ENCODE measurements at regions of chr19 and their contacts with region 1.

Region 1: GRCh38 chr19:4803736-4804695 is 12.5 kb downstream of the FEM1A start:
- DNase-seq: peak; percentile 84
- H3K4me3 ChIP-seq: peak overlapping the region in 1 of 8 donors; percentile 40
- H3K27ac ChIP-seq: no peak overlapping the region
- H3K4me1 ChIP-seq: peaks cover 0 to 34% (median 22%) of the 10 kb centered on the region in 6 donors
- H3K27me3 ChIP-seq: no peaks in the 10 kb centered on the region
- CTCF ChIP-seq: peak; percentile 34 to 88 (median 72)
- POLR2A ChIP-seq: no peak

Region 2: DNA sequence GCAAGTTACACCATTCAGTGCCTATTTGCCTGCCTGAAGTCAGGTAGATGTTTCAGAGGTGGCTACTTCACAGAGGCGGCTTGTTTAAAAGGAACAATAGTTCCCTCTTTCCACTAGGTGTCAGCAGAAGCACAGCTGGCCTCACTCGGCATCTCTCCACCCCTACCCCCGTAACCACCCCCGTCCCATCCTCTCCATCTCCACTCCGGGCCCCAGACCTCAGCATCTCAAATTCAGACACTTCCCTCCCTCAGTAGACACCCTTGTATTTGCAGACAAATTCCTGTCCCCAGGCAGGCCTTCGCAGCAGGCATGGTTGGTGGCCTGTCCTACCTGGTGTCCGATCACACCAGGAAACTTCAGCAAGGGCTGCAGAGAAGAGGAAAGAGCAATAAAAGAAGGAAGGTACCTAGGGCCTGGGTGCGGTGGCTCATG is 71.3 kb before region 1 on chr19:
- intact Hi-C with region 1: loop called (anchors 5 kb)
- DNase-seq: no peak
- H3K4me3 ChIP-seq: no peak overlapping the region
- H3K27ac ChIP-seq: no peak overlapping the region
- H3K4me1 ChIP-seq: peaks cover 0 to 11% (median 6%) of the 10 kb centered on the region in 6 donors
- H3K27me3 ChIP-seq: peaks cover 0 to 18% (median 0%) of the 10 kb centered on the region in 7 donors
- CTCF ChIP-seq: peak in 10 of 11 experiments; percentile 23 to 77 (median 68)
- POLR2A ChIP-seq: no peak

Region 3: DNA sequence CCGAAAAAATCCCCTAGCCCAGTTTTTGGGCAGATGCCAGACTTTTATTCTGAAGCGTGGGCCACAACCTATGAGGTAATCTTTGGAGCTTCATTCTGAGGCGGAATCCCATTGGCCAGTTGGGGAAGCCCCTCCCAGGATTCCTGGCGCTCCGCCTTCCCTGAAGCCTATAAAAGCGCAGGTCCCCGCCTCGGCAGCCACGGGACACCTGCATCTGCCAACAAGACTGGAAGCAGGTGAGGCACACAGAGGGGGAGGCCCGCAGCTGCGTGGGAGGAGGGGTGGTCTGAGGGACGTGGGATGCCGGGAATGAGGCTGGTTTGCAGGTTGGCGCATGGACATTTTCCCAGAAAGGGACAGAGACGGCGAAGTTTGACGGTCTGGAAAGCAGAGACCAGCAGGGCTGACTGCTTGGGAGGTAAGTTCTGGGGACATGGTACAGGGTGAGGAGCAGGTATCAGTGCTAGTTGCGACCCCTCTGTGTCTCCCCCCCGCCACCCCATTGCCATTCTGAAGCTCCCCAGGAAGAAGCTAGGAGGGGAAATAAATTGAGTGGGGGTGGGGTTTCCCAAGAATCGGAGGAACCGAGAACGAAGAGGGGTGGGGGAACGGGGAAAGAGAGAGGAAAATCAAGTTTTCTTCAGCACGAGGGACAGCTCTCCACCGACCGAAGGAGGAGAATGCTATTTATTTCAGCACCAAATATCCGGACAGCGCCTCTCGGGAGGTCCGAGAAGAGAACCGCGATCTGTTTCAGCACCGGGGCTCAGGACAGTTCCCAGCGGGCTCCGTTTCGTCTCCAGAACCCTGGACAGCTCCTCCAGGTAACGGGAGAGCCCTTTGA is 34.9 kb before region 1 on chr19:
- intact Hi-C with region 1: no loop called
- DNase-seq: peak; percentile 81
- H3K4me3 ChIP-seq: no peak overlapping the region
- H3K27ac ChIP-seq: no peak overlapping the region
- H3K4me1 ChIP-seq: no peaks in the 10 kb centered on the region
- H3K27me3 ChIP-seq: peaks cover 0 to 41% (median 0%) of the 10 kb centered on the region in 7 donors
- CTCF ChIP-seq: no peak
- POLR2A ChIP-seq: no peak

Region 4: DNA sequence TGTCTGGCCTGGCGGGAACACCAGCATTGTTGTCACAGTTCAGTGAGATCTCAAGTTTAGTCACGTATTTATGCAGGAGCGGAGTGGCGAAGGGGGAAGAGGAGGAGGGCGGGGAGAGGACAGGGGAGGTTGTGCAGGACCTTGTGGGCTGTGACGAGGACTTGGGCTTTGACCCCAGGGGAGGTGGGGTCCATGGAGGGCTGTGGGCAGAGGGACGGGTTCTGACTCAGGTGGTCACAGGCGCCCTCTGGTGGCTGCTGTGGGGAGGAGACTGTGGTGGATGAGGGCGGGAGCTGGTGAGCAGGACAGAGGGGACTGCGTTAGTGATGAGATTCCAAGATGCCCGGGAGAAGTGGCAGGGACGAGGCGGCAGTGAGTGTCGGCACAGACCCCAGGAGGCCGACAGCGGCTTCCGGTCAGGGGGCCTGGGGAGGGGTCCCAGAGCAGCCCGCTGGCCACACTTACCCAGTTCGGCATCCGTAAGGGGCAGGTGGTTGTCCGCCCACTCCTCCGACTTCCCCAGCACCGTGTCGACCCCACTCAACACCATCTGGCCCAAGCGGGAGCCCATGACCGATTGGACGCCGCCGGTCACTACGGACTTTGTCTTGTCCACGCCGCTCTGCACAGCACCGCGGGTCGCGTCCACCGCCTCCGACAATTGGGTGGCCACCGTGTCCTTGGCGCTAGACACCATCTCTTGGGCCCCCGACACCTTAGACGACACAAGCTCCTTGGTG is 47.7 kb after region 1 on chr19:
- intact Hi-C with region 1: loop called (anchors 5 kb)
- DNase-seq: peak; percentile 90
- H3K4me3 ChIP-seq: no peak overlapping the region
- H3K27ac ChIP-seq: no peak overlapping the region
- H3K4me1 ChIP-seq: peaks cover 0 to 6% (median 0%) of the 10 kb centered on the region in 6 donors
- H3K27me3 ChIP-seq: no peaks in the 10 kb centered on the region
- CTCF ChIP-seq: peak; percentile 75 to 96 (median 83)
- POLR2A ChIP-seq: no peak

Measured in spleen (tissue), 13 donors.